T-cell (primary cell): ENCODE measurements at regions of chr5 and their contacts with region 1.

Region 1: GRCh38 chr5:152271420-152271819 is 133.7 kb downstream of the NMUR2 start:
- DNase-seq: peak in 1 of 35 experiments; percentile 14
- ATAC-seq: no peak
- H3K4me3 ChIP-seq: no peak overlapping the region
- H3K4me3 Mint-ChIP-seq: no peak overlapping the region
- H3K27ac ChIP-seq: no peak overlapping the region
- H3K27ac Mint-ChIP-seq: no peak overlapping the region
- H3K4me1 ChIP-seq: no peaks in the 10 kb centered on the region
- H3K4me1 Mint-ChIP-seq: no peaks in the 10 kb centered on the region
- H3K27me3 ChIP-seq: no peaks in the 10 kb centered on the region
- H3K27me3 Mint-ChIP-seq: peaks cover 0 to 3% of the 10 kb centered on the region in 2 donors

Region 2: DNA sequence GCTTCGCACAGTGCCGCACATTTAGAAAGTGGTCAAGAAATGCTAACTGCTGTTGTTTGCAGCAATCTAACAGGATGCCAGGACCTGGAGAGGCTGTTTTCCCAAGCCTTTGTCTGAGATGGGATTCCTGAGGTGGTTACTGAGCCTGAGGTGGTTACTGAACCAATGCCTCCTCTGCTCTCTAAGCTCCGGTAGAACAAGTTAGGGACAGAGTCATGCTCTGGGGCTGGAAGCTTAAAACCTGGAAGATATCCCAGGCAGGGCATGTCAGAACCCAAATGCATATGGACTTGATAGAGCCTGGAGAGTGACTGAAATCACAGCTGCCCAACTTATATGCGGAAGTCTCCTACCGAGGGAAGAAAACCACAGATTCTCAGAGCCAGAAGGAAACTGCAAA is 633.7 kb before region 1 on chr5:
- CTCF ChIA-PET with region 1: interaction called in 1 of 2 experiments, 10 read pairs
- POLR2A ChIA-PET with region 1: no interaction called
- DNase-seq: no peak
- ATAC-seq: no peak
- H3K4me3 ChIP-seq: no peak overlapping the region
- H3K4me3 Mint-ChIP-seq: no peak overlapping the region
- H3K27ac ChIP-seq: no peak overlapping the region
- H3K27ac Mint-ChIP-seq: no peak overlapping the region
- H3K4me1 ChIP-seq: peaks cover 0 to 7% of the 10 kb centered on the region in 2 experiments
- H3K4me1 Mint-ChIP-seq: peaks cover 0 to 14% (median 11%) of the 10 kb centered on the region in 3 donors
- H3K27me3 ChIP-seq: peaks cover 0 to 12% of the 10 kb centered on the region in 2 experiments
- H3K27me3 Mint-ChIP-seq: peaks cover 0 to 1% of the 10 kb centered on the region in 2 donors

Region 3: DNA sequence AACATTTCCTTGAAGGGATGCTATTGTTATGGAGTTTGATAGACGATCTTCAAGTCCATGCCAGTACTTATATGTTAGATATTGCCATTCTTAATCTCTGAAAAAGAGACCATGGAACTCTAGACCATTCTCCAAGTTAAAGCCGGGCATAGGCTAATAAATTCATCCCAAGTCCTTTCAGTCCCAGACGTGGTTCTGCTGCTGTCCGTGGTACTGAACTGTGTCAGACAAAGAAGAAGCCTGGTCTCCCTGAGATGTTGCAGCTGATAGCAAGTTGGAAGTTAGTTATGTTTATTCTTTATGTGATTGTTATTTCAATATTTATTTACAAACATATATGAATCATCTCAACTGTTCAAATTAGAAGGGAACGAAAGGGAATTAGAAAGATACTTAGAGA is 25.0 kb before region 1 on chr5:
- CTCF ChIA-PET with region 1: no interaction called
- POLR2A ChIA-PET with region 1: no interaction called
- DNase-seq: no peak
- ATAC-seq: no peak
- H3K4me3 ChIP-seq: no peak overlapping the region
- H3K4me3 Mint-ChIP-seq: no peak overlapping the region
- H3K27ac ChIP-seq: no peak overlapping the region
- H3K27ac Mint-ChIP-seq: no peak overlapping the region
- H3K4me1 ChIP-seq: no peaks in the 10 kb centered on the region
- H3K4me1 Mint-ChIP-seq: no peaks in the 10 kb centered on the region
- H3K27me3 ChIP-seq: no peaks in the 10 kb centered on the region
- H3K27me3 Mint-ChIP-seq: peaks cover 0 to 4% of the 10 kb centered on the region in 2 donors

Region 4: GRCh38 chr5:152412129-152412528 is 140.7 kb after region 1 on chr5:
- CTCF ChIA-PET with region 1: no interaction called
- POLR2A ChIA-PET with region 1: no interaction called
- DNase-seq: no peak
- ATAC-seq: no peak
- H3K4me3 ChIP-seq: no peak overlapping the region
- H3K4me3 Mint-ChIP-seq: no peak overlapping the region
- H3K27ac ChIP-seq: no peak overlapping the region
- H3K27ac Mint-ChIP-seq: no peak overlapping the region
- H3K4me1 ChIP-seq: no peaks in the 10 kb centered on the region
- H3K4me1 Mint-ChIP-seq: no peaks in the 10 kb centered on the region
- H3K27me3 ChIP-seq: no peaks in the 10 kb centered on the region
- H3K27me3 Mint-ChIP-seq: peaks cover 0 to 3% of the 10 kb centered on the region in 2 donors